ENCODE measurements at regions of chr6 and their contacts with region 1.

Region 1: DNA sequence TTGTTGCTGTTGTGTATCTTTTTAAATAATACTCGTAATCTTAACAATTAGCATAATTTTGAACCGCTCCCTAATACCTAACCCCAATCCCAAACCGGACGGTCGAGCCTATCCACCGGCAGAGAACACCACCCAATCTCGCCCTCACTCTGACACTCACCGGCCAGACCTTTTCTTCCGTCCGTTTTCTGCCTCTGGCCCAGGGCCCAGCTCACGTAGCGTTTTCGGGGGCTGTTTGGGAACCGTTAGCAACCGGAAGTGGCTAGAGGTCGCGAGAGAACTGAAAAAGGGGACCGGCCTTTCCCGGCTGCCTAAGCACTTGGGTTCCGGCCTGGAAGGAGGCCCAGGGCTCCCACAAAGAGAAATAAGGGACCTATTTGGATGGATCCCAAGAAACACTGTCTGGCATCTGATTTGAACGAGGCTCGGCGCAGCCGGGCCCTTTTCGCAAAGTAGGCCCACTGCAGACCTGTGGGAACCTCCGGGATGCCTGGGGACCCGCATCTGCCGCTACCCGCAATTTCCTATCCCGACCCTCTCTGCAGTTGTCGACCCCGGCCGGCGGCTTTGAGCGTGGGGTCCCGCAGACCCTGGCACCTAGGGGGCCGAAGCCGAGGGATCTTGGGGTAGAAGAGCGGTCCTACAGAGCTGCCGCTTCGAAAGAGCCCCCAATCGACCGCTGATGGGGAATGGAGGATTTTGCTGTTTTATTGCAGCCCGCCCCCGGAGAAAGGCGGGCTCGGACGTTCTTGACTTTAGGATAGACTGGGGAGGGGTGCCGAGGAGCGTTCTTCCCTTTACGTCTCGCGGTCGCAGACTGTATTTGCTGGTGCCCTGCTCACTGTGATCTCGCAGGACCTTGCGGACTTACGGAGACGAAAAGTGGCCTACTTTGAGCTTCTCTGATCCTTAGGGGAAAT is 4.8 kb upstream of the ZKSCAN8 start:
- DNase-seq: peak; percentile 74
- H3K4me3 Mint-ChIP-seq: peak overlapping the region; percentile 92
- H3K27ac Mint-ChIP-seq: peak overlapping the region; percentile 88
- H3K4me1 Mint-ChIP-seq: peaks cover 71% of the 10 kb centered on the region
- H3K27me3 Mint-ChIP-seq: no peaks in the 10 kb centered on the region

Region 2: DNA sequence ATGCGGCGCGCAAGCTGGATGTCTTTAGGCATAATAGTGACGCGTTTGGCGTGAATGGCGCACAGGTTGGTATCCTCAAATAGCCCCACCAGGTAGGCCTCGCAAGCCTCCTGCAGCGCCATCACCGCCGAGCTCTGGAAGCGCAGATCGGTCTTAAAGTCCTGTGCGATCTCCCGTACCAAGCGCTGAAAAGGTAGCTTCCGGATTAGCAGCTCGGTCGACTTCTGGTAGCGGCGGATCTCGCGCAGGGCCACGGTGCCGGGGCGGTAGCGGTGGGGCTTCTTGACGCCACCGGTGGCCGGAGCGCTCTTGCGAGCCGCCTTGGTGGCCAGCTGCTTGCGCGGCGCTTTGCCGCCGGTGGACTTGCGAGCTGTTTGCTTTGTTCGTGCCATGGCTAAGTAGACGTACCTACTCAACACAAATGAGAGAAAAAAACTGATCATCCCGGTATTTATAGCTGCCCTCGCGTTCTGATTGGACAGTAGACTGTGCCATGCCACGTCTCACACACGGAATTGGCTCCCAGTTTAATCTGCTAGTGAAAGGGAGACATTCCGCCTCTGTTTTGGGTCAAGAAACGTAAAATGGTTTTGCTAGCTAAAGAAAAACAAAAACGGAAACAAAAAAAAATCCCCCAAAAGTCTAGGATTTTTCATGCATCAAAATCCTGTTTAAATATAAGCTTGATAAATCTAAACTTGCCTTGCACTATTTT is 264.8 kb before region 1 on chr6:
- CTCF ChIA-PET with region 1: no interaction called
- POLR2A ChIA-PET with region 1: interaction called, 21 read pairs
- DNase-seq: peak; percentile 87
- H3K4me3 Mint-ChIP-seq: peak overlapping the region; percentile 81
- H3K27ac Mint-ChIP-seq: peak overlapping the region; percentile 99
- H3K4me1 Mint-ChIP-seq: peaks cover 60% of the 10 kb centered on the region
- H3K27me3 Mint-ChIP-seq: no peaks in the 10 kb centered on the region

Region 3: GRCh38 chr6:28104392-28105244 is 32.2 kb before region 1 on chr6:
- CTCF ChIA-PET with region 1: interaction called, 10 read pairs
- POLR2A ChIA-PET with region 1: interaction called, 21 read pairs
- DNase-seq: peak; percentile 86
- H3K4me3 Mint-ChIP-seq: peak overlapping the region; percentile 83
- H3K27ac Mint-ChIP-seq: peak overlapping the region; percentile 68
- H3K4me1 Mint-ChIP-seq: peaks cover 15% of the 10 kb centered on the region
- H3K27me3 Mint-ChIP-seq: peaks cover 27% of the 10 kb centered on the region

Region 4: DNA sequence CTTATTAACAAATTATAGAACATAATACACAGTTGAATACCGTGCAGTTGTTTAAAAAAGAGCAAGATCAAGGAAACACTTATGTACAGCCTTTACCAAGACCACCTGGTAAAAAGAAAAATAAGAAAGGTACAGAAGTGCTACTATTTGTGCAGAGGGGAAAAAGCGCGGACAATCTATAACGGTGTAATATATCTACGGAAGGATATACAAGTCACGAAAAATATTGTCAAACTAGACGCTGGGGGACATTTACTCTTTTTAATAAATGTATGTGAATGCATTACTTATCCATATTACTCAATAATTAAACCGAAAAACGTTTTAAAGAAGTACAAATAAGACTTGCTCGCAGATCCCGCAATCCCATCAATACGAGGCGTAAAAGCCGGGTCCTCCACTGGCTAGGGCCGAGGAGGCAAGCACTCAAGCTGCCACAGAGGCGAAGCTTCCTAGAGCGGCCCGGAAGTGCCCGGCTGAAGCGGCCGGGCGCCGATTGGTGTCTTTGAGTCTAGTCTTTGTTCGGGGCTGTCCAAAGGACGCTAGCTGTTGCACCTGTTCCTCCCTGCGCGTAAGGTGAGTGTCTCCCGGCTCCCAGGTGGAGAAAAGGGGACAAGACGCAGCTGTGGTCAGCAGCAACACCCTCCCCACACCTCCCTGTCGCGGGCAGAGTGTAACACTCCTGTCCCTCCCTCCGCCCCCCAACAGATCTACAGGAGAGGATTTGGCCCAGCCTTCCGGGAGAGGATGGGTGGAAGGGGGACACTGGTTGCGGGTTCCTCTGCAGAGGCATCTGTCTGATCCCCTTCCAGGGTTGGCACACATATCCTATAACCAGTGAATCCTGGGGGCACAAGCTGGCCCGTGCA is 12.5 kb before region 1 on chr6 and contains the start of gene ZSCAN16:
- CTCF ChIA-PET with region 1: interaction called, 12 read pairs
- POLR2A ChIA-PET with region 1: interaction called, 78 read pairs
- DNase-seq: peak; percentile 77
- H3K4me3 Mint-ChIP-seq: peak within 1 kb of the TSS; percentile 89
- H3K27ac Mint-ChIP-seq: peak within 1 kb of the TSS; percentile 78
- H3K4me1 Mint-ChIP-seq: peaks cover 45% of the 10 kb centered on the region
- H3K27me3 Mint-ChIP-seq: no peaks in the 10 kb centered on the region
- total RNA-seq, gene ZSCAN16: 5.3 TPM

Region 5: DNA sequence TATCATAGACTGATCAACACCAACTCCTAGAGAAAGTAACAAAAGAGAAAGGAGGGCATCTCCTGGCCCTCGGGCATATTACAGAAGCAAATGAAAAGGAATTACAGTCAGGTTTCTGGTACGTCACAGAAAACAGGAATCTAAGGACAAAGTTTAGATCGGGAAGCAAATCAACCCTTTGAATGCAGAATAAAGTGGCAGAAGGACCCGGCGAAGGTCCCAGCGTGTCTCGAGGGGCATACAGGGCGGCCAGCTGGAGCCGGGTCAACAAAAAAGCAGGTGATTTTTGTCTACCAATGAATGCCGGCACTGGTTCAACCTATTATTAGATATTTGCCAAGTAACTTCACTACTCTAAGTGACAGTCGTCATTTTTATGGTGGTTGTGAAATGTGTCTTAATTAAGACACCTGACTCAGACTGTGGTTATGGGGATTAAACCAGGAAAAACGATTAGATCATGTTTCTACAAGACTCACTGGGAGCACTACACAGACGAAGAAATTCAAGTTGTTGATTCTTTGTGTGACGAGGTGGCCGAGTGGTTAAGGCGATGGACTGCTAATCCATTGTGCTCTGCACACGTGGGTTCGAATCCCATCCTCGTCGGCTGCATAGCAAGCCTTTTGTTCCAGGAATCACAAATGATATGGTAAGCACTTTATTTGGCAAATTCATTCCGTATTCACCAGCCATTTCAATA is 75.8 kb after region 1 on chr6:
- CTCF ChIA-PET with region 1: no interaction called
- POLR2A ChIA-PET with region 1: no interaction called
- DNase-seq: peak; percentile 42
- H3K4me3 Mint-ChIP-seq: peak overlapping the region; percentile 55
- H3K27ac Mint-ChIP-seq: no peak overlapping the region
- H3K4me1 Mint-ChIP-seq: peaks cover 34% of the 10 kb centered on the region
- H3K27me3 Mint-ChIP-seq: peaks cover 80% of the 10 kb centered on the region

Region 6: GRCh38 chr6:28252009-28252975 is 115.4 kb after region 1 on chr6 and contains the start of gene ZKSCAN4:
- CTCF ChIA-PET with region 1: interaction called, 4 read pairs
- POLR2A ChIA-PET with region 1: interaction called, 27 read pairs
- DNase-seq: peak; percentile 76
- H3K4me3 Mint-ChIP-seq: peak within 1 kb of the TSS; percentile 98
- H3K27ac Mint-ChIP-seq: peak within 1 kb of the TSS; percentile 78
- H3K4me1 Mint-ChIP-seq: peaks cover 29% of the 10 kb centered on the region
- H3K27me3 Mint-ChIP-seq: no peaks in the 10 kb centered on the region
- total RNA-seq, gene ZKSCAN4: 6.3 to 6.6 TPM

Region 7: GRCh38 chr6:28266962-28267694 is 130.3 kb after region 1 on chr6 and contains the start of gene ZSCAN26:
- CTCF ChIA-PET with region 1: interaction called, 4 read pairs
- POLR2A ChIA-PET with region 1: interaction called, 32 read pairs
- DNase-seq: peak; percentile 87
- H3K4me3 Mint-ChIP-seq: no peak within 1 kb of the TSS
- H3K27ac Mint-ChIP-seq: no peak within 1 kb of the TSS
- H3K4me1 Mint-ChIP-seq: peaks cover 23% of the 10 kb centered on the region
- H3K27me3 Mint-ChIP-seq: peaks cover 7% of the 10 kb centered on the region
- total RNA-seq, gene ZSCAN26: 9.9 to 10.2 TPM

Region 8: DNA sequence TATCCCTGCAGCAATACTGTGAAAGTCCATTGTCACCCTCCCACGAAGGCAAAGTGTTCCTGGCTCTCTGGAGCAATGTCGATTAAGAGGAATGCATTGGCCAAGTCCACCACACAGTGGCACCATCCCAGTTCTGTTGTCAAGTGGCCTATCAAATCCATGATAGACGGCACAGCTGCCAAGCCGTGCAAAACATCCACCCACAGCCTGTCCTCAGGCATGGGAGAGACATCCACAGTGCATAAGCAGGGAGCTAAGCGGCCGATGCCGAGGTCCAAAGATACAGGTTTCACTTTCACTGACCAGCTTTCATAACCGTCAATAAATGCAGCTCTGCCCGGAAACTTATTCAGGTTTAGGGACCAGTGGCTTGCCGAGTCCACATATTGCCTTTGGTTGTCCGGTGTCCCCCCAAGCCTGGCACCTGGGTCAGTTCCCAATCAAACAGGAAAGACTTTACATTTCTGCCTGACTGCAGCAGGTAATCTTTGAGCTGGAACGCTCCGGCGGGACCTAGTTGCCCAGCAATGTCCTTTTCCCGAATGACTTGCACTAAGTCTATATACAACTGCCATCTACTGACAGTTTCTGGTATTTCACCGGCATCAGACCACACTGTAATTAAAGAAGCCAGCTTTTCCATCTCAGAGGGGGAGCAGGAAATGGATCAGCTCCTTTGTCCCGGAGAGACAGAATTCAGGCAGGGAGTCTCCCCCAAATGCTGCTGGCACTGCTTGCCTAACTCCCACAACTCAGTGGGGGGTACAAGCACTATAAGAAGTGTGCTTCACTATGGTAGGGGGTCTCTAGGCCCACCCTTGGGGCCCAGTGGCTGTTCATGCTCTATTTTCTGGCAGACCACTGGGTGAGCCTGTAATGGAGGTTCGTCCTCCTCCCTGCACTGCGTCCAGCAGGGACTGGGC is 219.2 kb after region 1 on chr6:
- CTCF ChIA-PET with region 1: interaction called, 30 read pairs
- POLR2A ChIA-PET with region 1: interaction called, 7 read pairs
- DNase-seq: peak; percentile 61
- H3K4me3 Mint-ChIP-seq: peak overlapping the region; percentile 81
- H3K27ac Mint-ChIP-seq: peak overlapping the region; percentile 71
- H3K4me1 Mint-ChIP-seq: peaks cover 25% of the 10 kb centered on the region
- H3K27me3 Mint-ChIP-seq: no peaks in the 10 kb centered on the region